AG04450 (cell line): ENCODE measurements at regions of chr1 and their contacts with region 1.

Region 1: DNA sequence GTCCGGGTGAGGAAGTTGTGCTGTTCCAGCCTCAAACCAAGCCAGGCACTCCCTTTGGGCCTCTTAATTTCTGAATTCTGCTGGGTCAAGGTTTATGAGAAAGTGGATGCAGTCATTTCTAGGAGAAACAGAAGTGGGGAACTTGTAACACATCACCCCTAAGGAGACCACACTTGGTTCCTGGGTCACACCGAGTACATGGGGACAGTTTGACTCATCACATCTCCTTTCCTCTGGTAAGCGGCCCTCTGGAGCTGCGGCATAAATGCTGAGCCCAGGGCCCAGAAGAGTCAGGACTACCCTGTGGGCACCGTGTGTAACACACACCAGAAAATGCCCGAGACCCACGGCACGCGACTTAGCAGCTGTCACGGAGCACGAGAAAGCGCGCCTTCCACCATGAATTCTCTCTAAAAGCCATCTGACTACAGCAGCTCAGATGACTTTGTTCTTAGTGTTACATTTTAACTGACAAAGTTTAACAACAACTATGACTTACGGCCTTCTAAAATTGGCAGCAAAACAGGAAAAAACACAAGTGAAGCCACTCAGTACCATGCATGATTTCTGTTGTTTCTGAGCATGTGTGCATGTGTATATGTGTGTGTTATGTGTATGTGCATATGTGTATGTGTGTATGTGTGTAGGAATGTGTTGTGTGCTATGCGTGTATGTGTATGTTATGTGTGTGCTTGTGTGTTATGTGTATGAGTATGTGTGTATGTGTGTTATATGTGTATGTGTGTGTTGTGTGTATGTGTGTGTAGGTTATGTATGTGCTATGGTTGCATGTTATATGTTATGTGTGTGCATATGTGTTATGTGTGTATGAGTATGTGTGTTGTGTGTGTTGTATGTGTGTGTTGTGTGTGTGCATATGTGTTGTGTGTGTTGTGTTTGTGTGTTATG is 50.8 kb downstream of the TOMM20 start:
- DNase-seq: no peak
- H3K4me3 ChIP-seq: no peak overlapping the region
- H3K27ac ChIP-seq: peak overlapping the region; percentile 47
- H3K27me3 ChIP-seq: no peaks in the 10 kb centered on the region
- CTCF ChIP-seq: no peak

Region 2: DNA sequence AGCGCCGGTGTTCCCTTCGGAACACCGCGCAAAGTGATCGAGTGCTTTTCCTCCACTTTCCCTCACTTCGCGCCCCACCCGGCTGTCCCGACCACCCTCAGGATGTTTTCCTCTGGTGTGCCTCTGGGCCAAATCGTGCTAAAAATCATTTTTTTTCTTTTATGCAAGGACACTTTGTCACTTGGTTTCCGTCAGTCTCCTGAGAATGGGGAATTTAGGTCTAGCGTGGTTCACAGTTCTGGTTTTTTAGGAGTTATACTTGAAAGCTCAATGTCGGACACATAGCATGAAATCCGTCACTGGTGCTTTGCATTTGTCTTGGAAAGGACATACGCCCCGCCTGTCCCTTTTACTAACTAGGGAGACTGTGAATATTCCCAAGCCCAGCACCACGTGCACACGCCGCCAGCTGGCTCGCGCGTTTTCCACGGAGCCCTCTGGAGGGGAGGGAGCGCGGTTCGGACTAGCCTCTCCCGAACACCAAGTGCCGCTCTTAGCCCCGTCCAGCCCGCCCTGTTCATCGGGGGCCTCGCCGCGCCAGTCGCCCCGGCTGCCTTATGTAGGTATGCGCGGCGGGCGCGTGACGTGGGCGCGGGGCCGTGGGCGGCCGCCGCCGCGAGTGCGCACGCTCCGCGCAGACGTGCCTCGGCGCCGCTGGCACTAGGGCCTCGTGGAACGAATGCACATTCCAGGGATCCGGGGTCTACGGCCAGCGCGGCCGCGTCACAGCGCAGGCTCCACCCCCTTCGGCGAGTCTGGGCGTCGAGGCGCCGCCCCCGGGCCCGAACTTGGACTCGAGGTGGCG is 467.3 kb before region 1 on chr1:
- CTCF ChIA-PET with region 1: interaction called, 7 read pairs
- POLR2A ChIA-PET with region 1: interaction called, 13 read pairs
- DNase-seq: peak; percentile 89
- H3K4me3 ChIP-seq: peak overlapping the region; percentile 68
- H3K27ac ChIP-seq: peak overlapping the region; percentile 96
- H3K27me3 ChIP-seq: no peaks in the 10 kb centered on the region
- CTCF ChIP-seq: peak; percentile 16; the same call in 1 of the 2 replicates

Region 3: GRCh38 chr1:234970731-234971476 is 106.9 kb before region 1 on chr1:
- CTCF ChIA-PET with region 1: interaction called, 14 read pairs
- POLR2A ChIA-PET with region 1: interaction called, 3 read pairs
- DNase-seq: peak; percentile 97
- H3K4me3 ChIP-seq: peak overlapping the region; percentile 13; the same call in 1 of the 2 replicates
- H3K27ac ChIP-seq: peak overlapping the region; percentile 100
- H3K27me3 ChIP-seq: no peaks in the 10 kb centered on the region
- CTCF ChIP-seq: no peak

Region 4: GRCh38 chr1:235093696-235094592 is 16.1 kb after region 1 on chr1:
- CTCF ChIA-PET with region 1: interaction called, 18 read pairs
- POLR2A ChIA-PET with region 1: no interaction called
- DNase-seq: no peak
- H3K4me3 ChIP-seq: no peak overlapping the region
- H3K27ac ChIP-seq: no peak overlapping the region
- H3K27me3 ChIP-seq: no peaks in the 10 kb centered on the region
- CTCF ChIP-seq: peak; percentile 94

Region 5: GRCh38 chr1:235113183-235113917 is 35.5 kb after region 1 on chr1:
- CTCF ChIA-PET with region 1: no interaction called
- POLR2A ChIA-PET with region 1: no interaction called
- DNase-seq: no peak
- H3K4me3 ChIP-seq: no peak overlapping the region
- H3K27ac ChIP-seq: no peak overlapping the region
- H3K27me3 ChIP-seq: no peaks in the 10 kb centered on the region
- CTCF ChIP-seq: no peak

Region 6: DNA sequence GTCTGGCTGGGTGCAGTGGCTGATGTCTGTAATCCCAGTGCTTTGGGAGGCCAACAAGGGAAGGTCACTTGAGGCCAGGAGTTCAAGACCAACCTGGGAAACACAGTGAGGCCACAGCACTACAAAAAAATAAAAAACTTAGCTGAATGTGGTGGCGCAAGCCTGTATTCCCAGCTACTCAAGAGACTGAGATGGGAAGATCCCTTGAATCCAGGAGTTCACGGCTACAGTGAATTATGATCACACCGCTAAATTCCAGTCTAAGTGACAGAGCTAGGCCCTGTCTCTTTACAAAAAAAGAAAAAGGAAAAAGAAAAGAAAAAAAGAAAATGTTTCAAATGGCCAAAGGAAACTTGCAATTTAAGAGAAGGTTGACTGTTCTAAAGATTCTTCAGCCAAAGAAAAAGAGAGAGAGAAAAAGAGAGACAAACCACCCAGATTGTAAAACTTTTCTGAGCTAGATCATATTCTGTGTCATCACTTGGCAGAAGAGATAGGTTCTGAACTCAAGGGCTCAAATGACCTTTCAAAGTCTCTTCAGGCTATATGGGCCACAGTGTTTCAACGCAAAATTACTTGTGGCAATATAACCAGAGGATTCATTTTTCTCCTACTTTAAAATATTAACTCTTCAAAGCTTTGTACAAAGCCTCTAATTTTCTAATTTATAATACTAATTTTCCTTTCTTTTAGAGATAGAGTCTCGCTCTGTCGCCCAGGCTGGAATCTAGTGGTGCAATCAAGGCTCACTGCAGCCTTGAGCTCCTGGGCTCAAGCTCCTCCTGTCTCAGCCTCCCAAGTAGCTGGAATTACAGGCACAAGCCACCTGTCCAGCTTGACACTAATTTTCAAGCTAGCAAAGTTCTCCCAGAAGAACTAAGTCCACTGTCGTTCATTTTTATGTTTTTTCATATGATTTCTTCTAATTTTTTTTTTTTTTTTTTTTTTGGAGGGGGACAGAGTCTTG is 229.6 kb after region 1 on chr1:
- CTCF ChIA-PET with region 1: no interaction called
- POLR2A ChIA-PET with region 1: no interaction called
- DNase-seq: no peak
- H3K4me3 ChIP-seq: no peak overlapping the region
- H3K27ac ChIP-seq: peak overlapping the region; percentile 11
- H3K27me3 ChIP-seq: no peaks in the 10 kb centered on the region
- CTCF ChIP-seq: no peak